Adrenal gland (tissue), 19 donors: ENCODE measurements at regions of chr22 and their contacts with region 1.

Region 1: DNA sequence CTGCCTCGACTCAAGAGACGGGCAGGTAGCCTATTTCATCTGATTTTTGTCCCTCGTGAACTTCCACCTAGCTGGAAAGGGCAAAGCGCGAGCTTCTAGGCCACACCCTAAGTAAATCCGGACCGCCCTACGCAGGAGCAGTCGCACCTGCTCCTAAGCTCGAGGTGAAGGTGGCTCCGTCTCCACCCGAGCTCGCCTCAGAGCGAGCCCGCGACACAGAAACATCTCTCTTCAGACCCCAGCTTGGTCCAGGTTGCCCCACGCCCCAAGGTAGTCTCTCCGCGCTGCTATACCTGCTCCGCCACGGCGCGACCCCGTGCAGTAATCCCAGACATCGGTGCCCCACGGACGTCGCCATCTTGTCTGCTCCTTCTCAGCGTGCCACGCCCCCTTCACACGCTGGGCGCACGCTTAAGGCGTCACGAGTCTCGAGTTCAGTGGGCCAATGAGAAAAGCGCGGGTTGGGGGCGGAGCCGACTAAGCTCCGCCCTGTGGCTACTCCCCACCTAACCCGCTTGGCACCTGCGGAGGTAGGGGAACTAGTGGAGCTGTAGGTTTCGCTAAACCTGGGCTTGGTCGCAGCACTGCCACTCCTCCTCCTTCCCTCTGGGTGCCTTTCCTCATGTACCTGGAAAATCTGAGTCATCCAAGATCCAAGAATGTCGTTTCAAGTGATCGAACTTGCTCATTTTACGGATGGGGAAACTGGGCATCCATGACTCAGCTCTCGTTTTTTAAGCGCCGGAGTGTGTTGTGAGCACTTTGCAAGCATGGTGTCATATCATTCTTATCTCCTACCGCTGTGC is at the start of gene PISD:
- DNase-seq: peak; percentile 95 to 98 (median 96)
- H3K4me3 ChIP-seq: peak within 1 kb of the TSS; percentile 62 to 92 (median 64)
- H3K27ac ChIP-seq: peak within 1 kb of the TSS; percentile 37 to 91 (median 67)
- H3K4me1 ChIP-seq: peaks cover 12 to 14% of the 10 kb centered on the region in 2 donors
- H3K27me3 ChIP-seq: no peaks in the 10 kb centered on the region
- CTCF ChIP-seq: no peak
- POLR2A ChIP-seq: peak; percentile 65 to 85
- total RNA-seq, gene PISD: 42.1 to 99.5 (median 60.8) TPM

Region 2: DNA sequence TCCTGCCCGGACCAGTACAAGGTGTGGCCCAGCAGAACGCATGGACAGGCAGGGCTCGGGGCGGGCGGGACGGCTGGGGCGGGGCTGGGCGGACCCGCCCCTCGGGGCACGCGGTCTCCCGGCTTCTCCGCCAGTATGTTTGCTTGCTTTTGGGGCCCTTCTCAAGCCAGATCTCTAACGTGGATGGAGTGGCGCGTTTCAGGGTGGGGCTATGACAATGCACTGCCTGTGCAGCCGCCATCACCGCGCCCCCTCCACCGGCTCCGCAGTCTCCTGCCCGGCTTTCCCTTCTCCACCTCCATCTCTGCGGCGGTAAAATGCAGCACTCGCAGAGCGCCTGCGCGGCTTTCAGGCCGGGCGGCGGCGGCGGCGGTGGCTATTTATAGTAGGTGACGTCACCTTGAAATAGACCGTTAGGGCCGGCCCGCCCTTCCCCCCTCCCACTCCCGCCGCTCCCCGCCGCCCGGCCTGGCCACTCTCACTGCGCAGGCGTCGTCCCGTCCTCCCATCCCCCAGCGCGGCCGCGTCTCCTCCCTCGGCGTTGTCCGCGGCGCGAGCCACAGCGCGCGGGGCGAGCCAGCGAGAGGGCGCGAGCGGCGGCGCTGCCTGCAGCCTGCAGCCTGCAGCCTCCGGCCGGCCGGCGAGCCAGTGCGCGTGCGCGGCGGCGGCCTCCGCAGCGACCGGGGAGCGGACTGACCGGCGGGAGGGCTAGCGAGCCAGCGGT is 282.1 kb after region 1 on chr22 and contains the start of gene YWHAH:
- intact Hi-C with region 1: loop called in 1 of 2 experiments (anchors 10 kb)
- DNase-seq: peak; percentile 94 to 98 (median 97)
- H3K4me3 ChIP-seq: peak within 1 kb of the TSS; percentile 1 to 98 (median 80)
- H3K27ac ChIP-seq: peak within 1 kb of the TSS; percentile 81 to 100 (median 93)
- H3K4me1 ChIP-seq: peaks cover 0 to 35% of the 10 kb centered on the region in 2 donors
- H3K27me3 ChIP-seq: no peaks in the 10 kb centered on the region
- CTCF ChIP-seq: peak in 1 of 6 experiments; percentile 11
- POLR2A ChIP-seq: peak; percentile 97 to 98
- total RNA-seq, gene YWHAH: 59.5 to 128 (median 74.3) TPM